ENCODE measurements at regions of chr9 and their contacts with region 1.

Region 1: DNA sequence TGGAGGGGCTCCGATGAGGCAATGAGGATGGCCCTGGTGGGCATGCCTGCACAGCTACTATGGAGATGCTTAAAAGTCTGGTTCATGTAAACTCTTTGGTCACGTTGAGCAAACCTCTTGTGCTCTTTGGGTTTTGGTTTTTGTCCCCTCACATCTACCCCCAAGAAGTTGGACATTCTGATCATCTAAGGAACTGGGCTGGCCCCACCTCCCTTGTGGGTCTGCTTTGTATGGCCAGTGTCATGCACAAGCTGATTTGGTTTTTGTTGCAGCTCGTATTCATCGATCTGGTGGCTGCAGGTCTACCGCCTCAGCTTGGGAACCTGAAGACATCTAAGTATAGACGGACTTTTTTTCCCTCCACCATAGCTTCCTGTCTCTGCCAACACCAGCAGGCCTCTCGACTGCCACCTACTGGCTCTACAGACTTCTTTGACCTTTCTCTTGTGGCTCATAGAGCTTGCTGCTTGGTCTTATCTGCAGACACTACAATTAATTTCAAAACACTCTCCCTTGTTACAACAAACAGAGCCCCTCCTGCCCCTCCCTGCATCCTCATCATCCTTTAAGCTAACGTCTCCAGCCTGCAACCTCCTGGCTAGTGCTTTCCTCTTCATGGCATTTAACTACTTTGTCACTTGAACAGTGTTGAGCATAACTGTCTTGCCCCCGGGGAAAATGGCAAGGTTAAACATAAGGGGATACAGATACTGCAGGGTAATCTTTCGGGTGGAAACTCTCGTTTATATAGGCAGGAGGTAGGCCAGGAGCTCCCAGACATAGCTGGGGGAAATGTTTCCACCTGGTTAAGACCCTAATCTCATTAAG is 34.5 kb downstream of the TSTD2 start:
- DNase-seq: peak; percentile 77
- ATAC-seq: peak; percentile 85
- H3K4me3 ChIP-seq: peak overlapping the region in 1 of 5 experiments; percentile 23
- H3K4me3 Mint-ChIP-seq: peak overlapping the region; percentile 51
- H3K27ac ChIP-seq: no peak overlapping the region
- H3K27ac Mint-ChIP-seq: no peak overlapping the region
- H3K4me1 ChIP-seq: peaks cover 0 to 4% of the 10 kb centered on the region in 2 donors
- H3K4me1 Mint-ChIP-seq: peaks cover 6% of the 10 kb centered on the region
- H3K27me3 ChIP-seq: no peaks in the 10 kb centered on the region
- H3K27me3 Mint-ChIP-seq: no peaks in the 10 kb centered on the region
- CTCF ChIP-seq: peak; percentile 87

Region 2: DNA sequence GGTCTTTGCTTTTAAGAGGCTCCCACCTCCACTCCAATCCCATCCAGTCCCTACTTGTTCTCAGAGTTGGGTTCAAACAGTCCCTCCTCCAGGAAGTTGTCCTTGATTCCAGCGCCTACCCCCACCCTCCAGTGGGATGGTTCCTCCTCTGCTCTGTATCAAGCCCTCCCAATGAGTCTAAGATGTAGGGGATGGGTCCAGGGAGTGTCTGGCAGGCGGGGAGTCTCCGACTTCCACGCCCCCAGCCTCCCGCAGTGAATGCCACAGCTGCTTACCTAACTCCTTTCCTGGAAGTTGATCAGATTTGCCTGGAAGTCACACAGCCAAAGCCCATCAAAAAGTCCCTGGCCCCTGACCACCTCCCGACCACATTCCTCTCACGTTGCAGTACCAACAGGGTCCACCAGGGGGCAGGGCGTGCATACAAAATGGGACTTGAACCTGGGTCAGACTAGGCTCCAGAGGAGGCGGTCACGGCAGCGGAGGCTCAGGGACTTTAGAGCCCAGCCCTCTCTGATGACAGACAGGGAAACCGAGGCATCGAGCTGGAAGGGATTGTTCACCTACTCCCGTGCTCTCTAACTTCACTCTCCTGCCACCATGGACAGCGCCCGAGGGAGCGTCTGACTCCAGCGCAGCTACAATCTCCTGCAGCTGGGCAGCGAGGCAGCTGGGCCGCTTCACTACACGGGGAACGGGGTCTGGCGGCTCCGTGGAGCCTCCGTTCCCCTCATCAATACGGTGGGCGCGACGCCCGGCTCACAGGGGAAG is 211.8 kb before region 1 on chr9:
- CTCF ChIA-PET with region 1: interaction called, 20 read pairs
- POLR2A ChIA-PET with region 1: no interaction called
- intact Hi-C with region 1: loop called (anchors 1 kb)
- DNase-seq: peak; percentile 74
- ATAC-seq: peak; percentile 77
- H3K4me3 ChIP-seq: peak overlapping the region in 1 of 5 experiments; percentile 6
- H3K4me3 Mint-ChIP-seq: no peak overlapping the region
- H3K27ac ChIP-seq: no peak overlapping the region
- H3K27ac Mint-ChIP-seq: no peak overlapping the region
- H3K4me1 ChIP-seq: peaks cover 15% of the 10 kb centered on the region in 2 donors
- H3K4me1 Mint-ChIP-seq: peaks cover 18% of the 10 kb centered on the region
- H3K27me3 ChIP-seq: peaks cover 0 to 28% (median 0%) of the 10 kb centered on the region in 4 experiments
- H3K27me3 Mint-ChIP-seq: peaks cover 10% of the 10 kb centered on the region
- CTCF ChIP-seq: peak; percentile 99

Region 3: GRCh38 chr9:97406620-97407177 is 192.0 kb before region 1 on chr9:
- CTCF ChIA-PET with region 1: interaction called, 13 read pairs
- POLR2A ChIA-PET with region 1: no interaction called
- intact Hi-C with region 1: no loop called
- DNase-seq: no peak
- ATAC-seq: no peak
- H3K4me3 ChIP-seq: no peak overlapping the region
- H3K4me3 Mint-ChIP-seq: no peak overlapping the region
- H3K27ac ChIP-seq: no peak overlapping the region
- H3K27ac Mint-ChIP-seq: no peak overlapping the region
- H3K4me1 ChIP-seq: peaks cover 5 to 6% of the 10 kb centered on the region in 2 donors
- H3K4me1 Mint-ChIP-seq: peaks cover 14% of the 10 kb centered on the region
- H3K27me3 ChIP-seq: peaks cover 0 to 5% (median 0%) of the 10 kb centered on the region in 4 experiments
- H3K27me3 Mint-ChIP-seq: peaks cover 12% of the 10 kb centered on the region
- CTCF ChIP-seq: no peak

Region 4: DNA sequence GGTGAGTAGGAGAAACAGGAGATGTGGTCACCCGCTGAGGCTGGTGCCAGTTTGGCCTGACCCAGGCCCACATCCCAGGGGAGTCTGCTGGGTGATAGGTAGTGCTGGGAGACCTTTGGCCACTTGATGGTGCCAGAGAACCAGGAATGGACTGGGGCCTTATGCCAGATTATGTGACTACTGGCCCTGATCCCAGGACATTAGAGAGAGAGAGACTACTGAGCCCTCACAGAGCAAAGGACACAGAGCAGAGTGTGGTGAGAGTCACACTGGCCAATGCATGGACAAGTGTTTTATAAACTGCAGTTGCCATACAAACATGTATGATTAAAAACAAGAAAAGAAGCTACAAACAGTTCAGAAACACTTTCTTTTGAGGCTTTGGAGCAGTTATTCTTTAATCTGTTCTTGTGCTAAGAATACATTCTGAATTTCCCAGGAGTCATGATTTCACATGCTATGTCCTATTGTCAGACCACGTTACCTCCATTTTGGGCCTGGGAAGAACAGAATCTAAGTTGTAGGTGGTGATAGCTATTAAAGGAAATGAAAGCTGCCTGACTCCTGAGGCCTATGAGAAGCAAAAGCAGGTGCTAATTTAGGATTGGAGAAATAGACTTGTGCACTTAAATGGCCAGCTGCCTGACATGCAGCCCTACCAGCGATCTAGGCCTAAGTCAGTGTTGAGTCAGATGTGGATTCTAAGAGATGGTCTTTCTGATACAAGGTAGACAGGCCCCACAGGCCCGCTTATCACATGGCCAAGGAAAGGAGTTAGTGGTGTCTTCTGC is 129.8 kb before region 1 on chr9:
- CTCF ChIA-PET with region 1: interaction called, 81 read pairs
- POLR2A ChIA-PET with region 1: no interaction called
- intact Hi-C with region 1: loop called (anchors 1 kb)
- DNase-seq: peak; percentile 30
- ATAC-seq: peak; percentile 47
- H3K4me3 ChIP-seq: no peak overlapping the region
- H3K4me3 Mint-ChIP-seq: no peak overlapping the region
- H3K27ac ChIP-seq: no peak overlapping the region
- H3K27ac Mint-ChIP-seq: no peak overlapping the region
- H3K4me1 ChIP-seq: no peaks in the 10 kb centered on the region
- H3K4me1 Mint-ChIP-seq: no peaks in the 10 kb centered on the region
- H3K27me3 ChIP-seq: no peaks in the 10 kb centered on the region
- H3K27me3 Mint-ChIP-seq: no peaks in the 10 kb centered on the region
- CTCF ChIP-seq: peak; percentile 30

Region 5: DNA sequence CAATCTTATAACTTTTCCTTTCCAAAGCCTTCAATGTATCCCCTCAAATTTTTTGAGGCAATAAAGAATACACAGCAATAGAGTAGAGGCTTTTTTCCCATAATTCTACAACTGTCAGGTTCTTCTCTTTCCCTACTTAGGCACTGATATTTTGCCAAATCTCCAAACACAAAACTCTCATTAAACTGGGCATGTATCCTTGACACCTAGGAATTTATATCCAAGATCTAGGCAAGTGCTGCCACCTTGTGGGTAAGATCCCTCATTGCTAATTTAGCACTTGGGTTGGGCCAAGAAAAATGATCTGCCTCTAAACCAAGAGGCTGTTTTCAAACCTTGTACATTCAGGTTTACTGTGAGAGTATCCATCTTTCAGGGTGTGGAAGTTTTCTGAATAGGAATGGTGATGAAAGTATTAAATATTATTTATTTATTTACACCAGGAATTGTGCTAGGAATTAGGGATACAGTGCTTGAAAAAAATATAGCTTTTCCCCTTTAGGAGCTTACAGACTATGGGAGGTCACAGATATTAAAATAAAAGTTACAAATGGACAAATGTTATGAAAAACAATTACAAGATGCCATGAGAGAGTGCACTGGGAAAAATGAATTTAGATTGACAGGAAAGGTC is 16.9 kb after region 1 on chr9:
- CTCF ChIA-PET with region 1: interaction called, 19 read pairs
- POLR2A ChIA-PET with region 1: interaction called, 5 read pairs
- intact Hi-C with region 1: no loop called
- DNase-seq: peak; percentile 68
- ATAC-seq: peak; percentile 49
- H3K4me3 ChIP-seq: no peak overlapping the region
- H3K4me3 Mint-ChIP-seq: no peak overlapping the region
- H3K27ac ChIP-seq: no peak overlapping the region
- H3K27ac Mint-ChIP-seq: no peak overlapping the region
- H3K4me1 ChIP-seq: no peaks in the 10 kb centered on the region
- H3K4me1 Mint-ChIP-seq: peaks cover 8% of the 10 kb centered on the region
- H3K27me3 ChIP-seq: no peaks in the 10 kb centered on the region
- H3K27me3 Mint-ChIP-seq: no peaks in the 10 kb centered on the region
- CTCF ChIP-seq: peak; percentile 95

Region 6: GRCh38 chr9:97666907-97667686 is 68.4 kb after region 1 on chr9:
- CTCF ChIA-PET with region 1: no interaction called
- POLR2A ChIA-PET with region 1: no interaction called
- intact Hi-C with region 1: no loop called
- DNase-seq: no peak
- ATAC-seq: no peak
- H3K4me3 ChIP-seq: no peak overlapping the region
- H3K4me3 Mint-ChIP-seq: no peak overlapping the region
- H3K27ac ChIP-seq: peak overlapping the region in 1 of 2 donors; percentile 17
- H3K27ac Mint-ChIP-seq: no peak overlapping the region
- H3K4me1 ChIP-seq: no peaks in the 10 kb centered on the region
- H3K4me1 Mint-ChIP-seq: peaks cover 2% of the 10 kb centered on the region
- H3K27me3 ChIP-seq: no peaks in the 10 kb centered on the region
- H3K27me3 Mint-ChIP-seq: no peaks in the 10 kb centered on the region
- CTCF ChIP-seq: no peak

Region 7: DNA sequence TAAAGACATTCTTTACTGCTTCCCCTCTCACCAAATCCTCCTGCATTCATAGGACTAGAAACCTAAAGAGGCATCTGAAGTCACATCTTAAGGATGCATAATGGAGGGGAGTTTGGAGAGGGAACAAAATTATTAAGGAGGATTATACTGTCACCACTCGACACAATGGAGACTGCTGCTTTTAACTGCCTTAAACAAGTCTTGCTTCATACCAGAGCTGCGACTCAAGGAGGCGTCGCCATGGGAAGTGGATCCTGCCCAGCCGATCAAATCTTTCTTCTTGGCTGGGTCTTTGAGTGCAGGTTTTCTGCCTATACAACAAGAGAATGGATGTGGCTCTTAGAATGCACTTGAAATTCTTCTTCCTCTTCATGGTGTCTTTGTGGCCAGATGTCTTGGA is 187.7 kb after region 1 on chr9:
- CTCF ChIA-PET with region 1: no interaction called
- POLR2A ChIA-PET with region 1: no interaction called
- intact Hi-C with region 1: no loop called
- DNase-seq: no peak
- ATAC-seq: no peak
- H3K4me3 ChIP-seq: no peak overlapping the region
- H3K4me3 Mint-ChIP-seq: no peak overlapping the region
- H3K27ac ChIP-seq: no peak overlapping the region
- H3K27ac Mint-ChIP-seq: no peak overlapping the region
- H3K4me1 ChIP-seq: no peaks in the 10 kb centered on the region
- H3K4me1 Mint-ChIP-seq: no peaks in the 10 kb centered on the region
- H3K27me3 ChIP-seq: peaks cover 0 to 6% (median 3%) of the 10 kb centered on the region in 4 experiments
- H3K27me3 Mint-ChIP-seq: peaks cover 25% of the 10 kb centered on the region
- CTCF ChIP-seq: no peak

Region 8: GRCh38 chr9:98168941-98169488 is 570.3 kb after region 1 on chr9:
- CTCF ChIA-PET with region 1: no interaction called
- POLR2A ChIA-PET with region 1: no interaction called
- intact Hi-C with region 1: no loop called
- DNase-seq: no peak
- ATAC-seq: peak; percentile 69
- H3K4me3 ChIP-seq: no peak overlapping the region
- H3K4me3 Mint-ChIP-seq: peak overlapping the region; percentile 32
- H3K27ac ChIP-seq: peak overlapping the region; percentile 32 to 38
- H3K27ac Mint-ChIP-seq: peak overlapping the region; percentile 86
- H3K4me1 ChIP-seq: peaks cover 0 to 12% of the 10 kb centered on the region in 2 donors
- H3K4me1 Mint-ChIP-seq: peaks cover 9% of the 10 kb centered on the region
- H3K27me3 ChIP-seq: no peaks in the 10 kb centered on the region
- H3K27me3 Mint-ChIP-seq: peaks cover 3% of the 10 kb centered on the region
- CTCF ChIP-seq: no peak